Endothelial cell of umbilical vein (primary cell): ENCODE measurements at regions of chr6 and their contacts with region 1.

Region 1: DNA sequence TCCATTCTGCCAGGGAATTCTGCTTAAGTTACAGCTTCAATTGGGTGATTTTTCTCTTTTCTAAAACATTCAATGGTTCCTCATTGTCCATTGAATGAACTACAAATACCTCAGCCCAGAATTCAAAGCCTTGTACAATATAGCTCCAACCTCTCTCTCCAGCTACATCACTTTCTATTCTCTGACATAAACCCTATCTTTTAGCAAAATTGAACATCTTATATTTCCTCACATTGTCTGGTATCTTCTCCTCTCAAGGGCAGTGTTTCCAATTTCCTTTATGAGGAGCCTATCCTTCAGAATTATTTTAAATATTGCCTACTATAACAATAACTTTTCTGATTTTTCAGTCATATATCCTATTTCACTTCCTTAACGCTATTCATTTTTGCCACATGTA is 203.6 kb upstream of the RNF217 start:
- DNase-seq: no peak
- H3K4me3 ChIP-seq: no peak overlapping the region
- H3K27ac ChIP-seq: no peak overlapping the region
- H3K4me1 ChIP-seq: no peaks in the 10 kb centered on the region
- H3K27me3 ChIP-seq: no peaks in the 10 kb centered on the region
- CTCF ChIP-seq: no peak
- POLR2A ChIP-seq: no peak

Region 2: DNA sequence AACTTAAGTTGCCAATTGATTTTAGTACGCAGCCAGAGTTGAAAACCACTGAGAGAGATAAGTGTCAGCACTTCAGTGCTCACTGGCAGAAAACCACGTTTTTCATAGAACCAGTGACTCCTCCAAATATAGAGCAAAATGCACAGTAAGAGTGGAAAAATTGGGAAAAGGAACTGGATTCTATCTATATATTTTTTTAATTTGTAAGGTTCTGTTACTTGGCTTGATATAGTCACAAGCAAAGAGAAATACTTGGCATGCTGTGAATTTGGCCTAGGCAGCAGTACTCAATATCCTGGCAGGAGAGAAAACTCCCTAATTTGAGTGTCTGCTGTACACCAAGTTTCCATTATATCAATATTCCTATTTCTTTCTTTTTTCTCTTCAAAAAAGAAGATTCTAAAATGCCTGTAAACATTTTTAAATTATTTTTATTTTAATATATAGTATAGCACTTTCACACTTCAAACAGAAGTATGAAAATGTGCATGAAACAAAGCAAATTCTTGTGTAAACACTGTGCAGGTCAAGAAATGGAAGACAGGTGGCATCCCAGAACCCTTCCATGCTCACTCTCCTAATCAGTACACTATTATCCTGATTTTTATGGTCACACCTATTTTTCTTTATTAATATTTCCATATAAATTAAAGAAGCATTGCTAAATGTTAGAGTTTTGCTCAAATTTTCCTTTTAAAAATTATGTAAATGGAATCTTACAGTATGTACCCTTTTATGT is 358.2 kb before region 1 on chr6:
- CTCF ChIA-PET with region 1: no interaction called
- POLR2A ChIA-PET with region 1: no interaction called
- dilution Hi-C with region 1: no loop called
- intact Hi-C with region 1: loop called (anchors 2 kb)
- DNase-seq: no peak
- H3K4me3 ChIP-seq: no peak overlapping the region
- H3K27ac ChIP-seq: no peak overlapping the region
- H3K4me1 ChIP-seq: no peaks in the 10 kb centered on the region
- H3K27me3 ChIP-seq: no peaks in the 10 kb centered on the region
- CTCF ChIP-seq: peak in 1 of 2 donors; percentile 10
- POLR2A ChIP-seq: no peak

Region 3: DNA sequence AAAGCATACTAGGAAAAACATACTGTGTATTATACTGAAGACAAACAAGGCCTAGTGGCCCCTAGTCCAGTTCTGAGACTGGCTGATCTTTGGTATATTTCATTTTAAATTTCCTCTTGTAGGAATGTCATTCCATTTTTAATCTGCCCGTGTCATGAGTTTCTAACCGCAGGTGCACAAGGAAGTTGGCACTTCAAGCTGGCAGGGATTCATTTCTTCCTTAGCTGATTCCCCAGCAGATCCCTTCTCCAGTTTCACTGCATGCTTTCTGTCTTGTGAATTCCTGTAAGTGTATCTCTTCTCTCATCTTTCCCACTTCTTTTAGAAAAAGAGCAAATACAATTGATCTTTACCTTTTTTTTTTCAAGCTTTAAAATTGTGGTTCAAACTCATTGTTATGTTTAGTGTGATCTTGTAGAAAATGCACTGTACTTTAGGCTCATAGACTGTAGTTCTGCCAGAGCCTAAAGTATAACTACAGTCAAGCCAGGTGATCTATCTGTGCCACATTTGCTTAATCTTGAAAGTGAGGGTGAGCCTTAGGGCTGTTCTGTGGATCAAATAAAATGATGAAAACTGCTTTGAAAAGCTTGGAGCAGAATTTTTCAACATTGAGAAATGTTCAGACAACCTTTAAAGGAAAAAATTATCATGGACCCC is 240.6 kb after region 1 on chr6:
- CTCF ChIA-PET with region 1: no interaction called
- POLR2A ChIA-PET with region 1: no interaction called
- dilution Hi-C with region 1: no loop called
- intact Hi-C with region 1: no loop called
- DNase-seq: no peak
- H3K4me3 ChIP-seq: no peak overlapping the region
- H3K27ac ChIP-seq: no peak overlapping the region
- H3K4me1 ChIP-seq: peaks cover 28% of the 10 kb centered on the region
- H3K27me3 ChIP-seq: no peaks in the 10 kb centered on the region
- CTCF ChIP-seq: no peak
- POLR2A ChIP-seq: no peak